ACHN (cell line): ENCODE measurements at regions of chr16 and their contacts with region 1.

Region 1: GRCh38 chr16:19521471-19522396 is at the start of gene GDE1:
- DNase-seq: peak; percentile 94

Region 2: DNA sequence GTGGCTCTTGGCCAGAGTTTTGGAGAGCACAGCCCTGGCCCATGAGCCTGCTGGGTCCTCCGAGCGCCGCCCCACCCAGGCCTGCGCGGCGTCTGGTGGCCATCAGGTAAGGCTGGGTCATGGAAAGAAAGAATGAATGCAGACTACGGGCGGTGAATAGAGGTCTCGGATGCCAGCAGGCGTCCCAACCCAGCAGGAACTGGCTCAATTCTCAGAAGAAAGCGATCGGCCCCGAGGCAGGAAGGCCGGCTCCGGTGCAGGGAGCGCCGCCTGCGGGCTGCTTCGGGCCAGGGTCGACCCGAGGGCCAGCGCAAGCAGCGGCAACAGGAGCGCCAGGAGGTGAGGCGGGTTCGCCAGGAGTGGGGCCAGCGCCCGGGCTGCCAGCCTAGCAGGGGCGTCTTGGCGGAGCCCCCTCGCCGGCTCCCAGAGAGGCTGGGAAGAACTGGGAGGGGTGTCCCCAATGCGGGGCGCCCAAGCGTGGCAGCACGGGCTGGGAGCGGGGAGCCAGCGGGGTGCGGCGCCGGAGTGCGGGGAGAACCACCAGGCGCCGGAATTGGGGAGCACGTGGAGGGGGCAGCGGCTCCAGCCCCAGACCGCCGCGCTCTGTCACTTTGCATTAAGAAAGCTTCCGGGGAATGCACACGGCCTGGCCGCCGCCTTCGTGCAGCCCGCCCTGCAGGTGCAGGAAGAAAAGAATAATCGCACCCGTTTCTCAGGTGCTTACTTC is 111.1 kb before region 1 on chr16:
- in situ Hi-C with region 1: loop called (anchors 25 kb)
- DNase-seq: peak; percentile 15

Region 3: GRCh38 chr16:19432429-19432828 is 89.3 kb before region 1 on chr16:
- in situ Hi-C with region 1: no loop called
- DNase-seq: peak; percentile 24